ENCODE measurements at regions of chr1 and their contacts with region 1.

Region 1: DNA sequence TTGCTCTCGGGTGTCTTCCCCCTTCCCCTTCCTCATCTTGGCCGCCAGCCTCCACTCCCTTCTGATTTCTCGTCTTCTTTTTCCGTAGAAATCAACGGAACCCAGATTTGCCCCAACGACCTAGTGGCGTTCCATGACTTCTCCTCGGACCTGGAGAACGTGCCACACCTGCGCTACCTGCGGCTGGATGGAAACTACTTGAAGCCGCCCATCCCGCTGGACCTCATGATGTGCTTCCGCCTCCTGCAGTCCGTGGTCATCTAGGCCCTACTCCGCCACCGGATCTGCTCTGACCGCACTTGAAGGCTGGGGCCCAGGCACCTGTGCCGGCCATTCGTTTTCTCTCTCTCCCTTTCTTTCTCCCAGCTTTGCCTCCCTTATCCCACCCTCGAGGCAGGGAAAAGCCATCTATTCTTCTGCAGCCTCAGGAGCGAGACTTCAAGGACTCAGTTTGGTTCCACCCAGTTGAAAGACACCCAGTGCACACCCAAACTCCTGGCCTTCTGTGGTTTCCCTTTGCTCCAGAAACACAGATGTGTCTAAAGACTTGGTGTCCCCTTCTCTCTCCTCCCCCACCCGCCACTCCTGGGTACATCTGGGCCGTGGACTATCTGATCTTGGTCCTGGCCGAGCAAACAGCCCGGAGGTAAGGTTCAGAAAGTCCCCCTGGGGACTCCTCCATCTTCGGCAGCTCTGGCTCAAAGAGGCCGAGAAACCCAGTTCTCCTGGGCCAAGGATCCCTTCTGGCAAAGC is 7.2 kb upstream of the OPTC start:
- DNase-seq: no peak
- H3K4me3 Mint-ChIP-seq: peak overlapping the region; percentile 66
- H3K27ac Mint-ChIP-seq: peak overlapping the region; percentile 26
- H3K4me1 Mint-ChIP-seq: peaks cover 6% of the 10 kb centered on the region
- H3K27me3 Mint-ChIP-seq: peaks cover 7% of the 10 kb centered on the region
- CTCF ChIP-seq: no peak

Region 2: GRCh38 chr1:203273206-203273868 is 213.5 kb before region 1 on chr1:
- CTCF ChIA-PET with region 1: interaction called, 175 read pairs
- POLR2A ChIA-PET with region 1: no interaction called
- intact Hi-C with region 1: loop called (anchors 1 kb)
- DNase-seq: peak; percentile 96
- H3K4me3 Mint-ChIP-seq: peak overlapping the region; percentile 28
- H3K27ac Mint-ChIP-seq: no peak overlapping the region
- H3K4me1 Mint-ChIP-seq: peaks cover 3% of the 10 kb centered on the region
- H3K27me3 Mint-ChIP-seq: no peaks in the 10 kb centered on the region
- CTCF ChIP-seq: peak; percentile 100

Region 3: DNA sequence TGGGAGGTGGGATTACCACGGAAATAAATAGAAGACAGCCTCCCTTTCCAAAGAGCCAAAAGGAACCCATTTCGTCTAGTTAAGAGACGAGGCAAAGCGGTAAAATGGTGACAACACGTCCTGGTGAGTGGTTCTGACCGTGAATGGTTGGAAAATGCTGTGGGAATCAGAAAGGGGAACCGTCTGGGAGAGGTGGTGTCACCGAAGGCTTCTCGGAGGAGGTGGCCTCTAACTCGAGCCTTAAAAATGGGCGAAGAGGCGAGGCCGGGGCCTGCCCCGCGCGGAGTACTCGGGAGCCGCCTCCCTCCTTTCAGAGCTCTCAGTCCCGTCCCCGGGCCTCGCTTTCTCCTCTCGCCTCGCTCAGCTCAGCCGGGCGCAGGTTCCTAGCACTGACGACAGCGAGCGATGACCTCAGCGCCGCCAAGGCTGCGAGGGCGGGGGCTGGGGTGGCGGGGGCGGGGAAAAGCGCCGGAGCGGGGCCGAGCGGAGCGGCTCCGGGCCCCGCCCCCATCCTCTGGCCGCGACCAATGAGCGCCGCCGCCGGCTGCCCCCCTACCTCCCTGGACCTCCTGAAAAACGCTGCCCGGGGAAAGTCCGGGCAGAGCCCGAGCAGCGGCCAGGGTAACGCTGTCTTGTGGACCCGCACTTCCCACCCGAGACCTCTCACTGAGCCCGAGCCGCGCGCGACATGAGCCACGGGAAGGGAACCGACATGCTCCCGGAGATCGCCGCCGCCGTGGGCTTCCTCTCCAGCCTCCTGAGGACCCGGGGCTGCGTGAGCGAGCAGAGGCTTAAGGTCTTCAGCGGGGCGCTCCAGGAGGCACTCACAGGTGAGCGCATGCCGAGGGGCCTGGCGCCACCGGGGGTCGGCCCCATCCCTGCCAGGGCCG is 181.6 kb before region 1 on chr1 and contains the start of gene BTG2:
- CTCF ChIA-PET with region 1: interaction called, 14 read pairs
- POLR2A ChIA-PET with region 1: no interaction called
- intact Hi-C with region 1: no loop called
- DNase-seq: peak; percentile 96
- H3K4me3 Mint-ChIP-seq: peak within 1 kb of the TSS; percentile 71
- H3K27ac Mint-ChIP-seq: peak within 1 kb of the TSS; percentile 6
- H3K4me1 Mint-ChIP-seq: peaks cover 48% of the 10 kb centered on the region
- H3K27me3 Mint-ChIP-seq: no peaks in the 10 kb centered on the region
- CTCF ChIP-seq: no peak
- total RNA-seq, gene BTG2: 39.8 and 44.4 TPM in 2 replicates

Region 4: GRCh38 chr1:203368624-203369451 is 118.0 kb before region 1 on chr1:
- CTCF ChIA-PET with region 1: interaction called, 86 read pairs
- POLR2A ChIA-PET with region 1: interaction called, 5 read pairs
- intact Hi-C with region 1: loop called (anchors 1 kb)
- DNase-seq: peak; percentile 93
- H3K4me3 Mint-ChIP-seq: no peak overlapping the region
- H3K27ac Mint-ChIP-seq: no peak overlapping the region
- H3K4me1 Mint-ChIP-seq: peaks cover 17% of the 10 kb centered on the region
- H3K27me3 Mint-ChIP-seq: peaks cover 45% of the 10 kb centered on the region
- CTCF ChIP-seq: peak; percentile 54

Region 5: GRCh38 chr1:203440771-203441170 is 46.0 kb before region 1 on chr1:
- CTCF ChIA-PET with region 1: interaction called, 13 read pairs
- POLR2A ChIA-PET with region 1: no interaction called
- intact Hi-C with region 1: loop called (anchors 5 kb)
- DNase-seq: peak; percentile 61
- H3K4me3 Mint-ChIP-seq: no peak overlapping the region
- H3K27ac Mint-ChIP-seq: no peak overlapping the region
- H3K4me1 Mint-ChIP-seq: no peaks in the 10 kb centered on the region
- H3K27me3 Mint-ChIP-seq: peaks cover 66% of the 10 kb centered on the region
- CTCF ChIP-seq: peak; percentile 48

Region 6: DNA sequence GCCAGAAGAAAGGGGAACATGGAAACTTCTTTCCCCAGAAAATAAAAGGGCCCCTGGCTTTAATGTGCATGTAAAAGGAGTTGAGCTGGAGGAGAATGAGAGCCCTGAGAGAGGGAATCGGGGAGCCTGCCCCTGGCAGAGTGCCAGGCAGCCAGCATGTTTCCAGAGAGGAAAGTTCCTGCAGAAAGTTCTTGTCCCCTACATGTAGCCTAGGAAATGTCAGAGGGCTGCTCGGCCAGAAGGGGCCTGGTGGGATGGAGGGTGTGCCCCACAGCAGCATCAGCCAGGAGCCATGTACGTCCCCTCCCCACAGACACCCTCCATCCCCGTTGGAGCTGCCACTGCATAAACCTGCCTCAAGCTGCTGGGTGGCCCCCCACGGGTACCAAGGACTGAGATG is 16.6 kb before region 1 on chr1:
- CTCF ChIA-PET with region 1: interaction called, 93 read pairs
- POLR2A ChIA-PET with region 1: interaction called, 5 read pairs
- intact Hi-C with region 1: no loop called
- DNase-seq: no peak
- H3K4me3 Mint-ChIP-seq: no peak overlapping the region
- H3K27ac Mint-ChIP-seq: no peak overlapping the region
- H3K4me1 Mint-ChIP-seq: no peaks in the 10 kb centered on the region
- H3K27me3 Mint-ChIP-seq: peaks cover 30% of the 10 kb centered on the region
- CTCF ChIP-seq: no peak

Region 7: DNA sequence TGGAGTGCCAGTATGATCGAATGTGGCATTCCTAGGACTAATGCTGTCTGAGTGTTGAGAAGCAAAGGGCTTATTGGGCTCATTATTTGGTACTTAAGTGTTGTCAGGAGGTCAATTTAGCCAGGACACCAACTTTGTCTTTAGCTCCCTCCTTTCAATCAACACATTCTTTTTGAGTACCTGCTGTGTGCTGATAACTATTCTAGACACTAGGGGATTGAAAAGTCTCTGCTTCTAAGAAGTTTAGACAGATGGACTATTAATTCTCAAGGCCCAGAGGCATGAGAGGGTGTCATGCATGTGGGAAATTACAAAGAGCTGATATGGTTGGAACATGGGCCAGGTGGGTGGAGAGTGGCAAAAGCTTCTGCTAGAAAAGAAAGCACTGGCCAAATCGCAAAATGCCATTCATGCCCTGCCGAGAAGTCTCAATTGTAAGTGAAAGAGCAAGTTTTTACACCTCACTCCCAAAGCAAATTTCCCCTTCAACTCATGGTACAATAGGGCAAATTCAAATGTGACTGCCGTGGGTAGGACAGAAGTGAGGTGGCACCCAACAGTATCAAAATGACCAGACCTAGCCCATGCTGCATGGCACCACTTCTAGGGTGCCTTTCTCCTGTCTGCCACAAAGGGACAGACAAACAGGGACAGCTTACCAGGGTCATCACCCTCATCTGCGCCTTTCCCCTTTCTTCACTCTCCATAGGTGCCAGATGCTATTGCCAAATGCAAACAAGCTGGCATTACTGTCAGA is 224.6 kb after region 1 on chr1:
- CTCF ChIA-PET with region 1: interaction called, 12 read pairs
- POLR2A ChIA-PET with region 1: interaction called, 4 read pairs
- intact Hi-C with region 1: no loop called
- DNase-seq: no peak
- H3K4me3 Mint-ChIP-seq: no peak overlapping the region
- H3K27ac Mint-ChIP-seq: no peak overlapping the region
- H3K4me1 Mint-ChIP-seq: peaks cover 7% of the 10 kb centered on the region
- H3K27me3 Mint-ChIP-seq: no peaks in the 10 kb centered on the region
- CTCF ChIP-seq: no peak

Measured in MCF 10A (cell line).